ENCODE measurements at regions of chr9 and their contacts with region 1.

Region 1: GRCh38 chr9:136784249-136784996 is 6.7 kb upstream of the TMEM141 start:
- DNase-seq: peak; percentile 46
- H3K4me3 Mint-ChIP-seq: no peak overlapping the region
- H3K27ac Mint-ChIP-seq: no peak overlapping the region
- H3K4me1 Mint-ChIP-seq: peaks cover 5% of the 10 kb centered on the region
- H3K27me3 Mint-ChIP-seq: peaks cover 29% of the 10 kb centered on the region
- CTCF ChIP-seq: peak; percentile 71

Region 2: DNA sequence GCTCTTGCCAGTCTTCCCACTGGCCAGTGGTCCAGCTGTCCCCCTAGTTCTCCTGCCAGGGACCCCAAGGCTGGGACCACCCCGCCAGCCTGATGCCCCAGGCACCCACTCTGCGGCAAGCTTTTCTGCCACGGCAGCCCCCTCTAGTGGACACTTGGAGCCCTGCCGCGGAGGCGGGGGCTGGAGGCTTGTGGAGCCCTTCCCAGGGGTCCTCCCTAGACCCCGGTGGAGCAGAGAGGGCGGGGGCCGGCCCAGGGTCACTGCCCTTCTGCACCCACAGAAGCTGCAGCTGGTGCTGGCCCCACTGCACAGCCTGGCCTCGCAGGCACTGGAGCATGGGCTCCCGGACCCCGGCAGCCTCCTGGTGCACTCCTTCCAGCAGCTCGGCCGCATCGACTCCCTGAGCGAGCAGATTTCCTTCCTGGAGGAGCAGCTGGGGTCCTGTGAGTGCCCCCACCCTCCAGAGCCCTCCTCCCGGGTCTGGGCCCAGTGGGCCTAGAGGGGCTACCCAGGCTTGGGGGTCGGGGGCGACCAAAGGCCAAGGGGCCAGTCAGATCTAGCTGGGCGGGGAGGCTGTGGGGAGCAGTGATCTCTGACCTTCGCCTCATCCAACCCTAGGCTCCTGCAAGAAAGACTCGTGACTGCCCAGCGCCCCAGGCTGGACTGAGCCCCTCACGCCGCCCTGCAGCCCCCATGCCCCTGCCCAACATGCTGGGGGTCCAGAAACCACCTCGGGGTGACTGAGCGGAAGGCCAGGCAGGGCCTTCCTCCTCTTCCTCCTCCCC is 112.6 kb before region 1 on chr9:
- CTCF ChIA-PET with region 1: no interaction called
- POLR2A ChIA-PET with region 1: no interaction called
- intact Hi-C with region 1: no loop called
- DNase-seq: peak; percentile 28
- H3K4me3 Mint-ChIP-seq: no peak overlapping the region
- H3K27ac Mint-ChIP-seq: no peak overlapping the region
- H3K4me1 Mint-ChIP-seq: no peaks in the 10 kb centered on the region
- H3K27me3 Mint-ChIP-seq: no peaks in the 10 kb centered on the region
- CTCF ChIP-seq: peak; percentile 85

Region 3: DNA sequence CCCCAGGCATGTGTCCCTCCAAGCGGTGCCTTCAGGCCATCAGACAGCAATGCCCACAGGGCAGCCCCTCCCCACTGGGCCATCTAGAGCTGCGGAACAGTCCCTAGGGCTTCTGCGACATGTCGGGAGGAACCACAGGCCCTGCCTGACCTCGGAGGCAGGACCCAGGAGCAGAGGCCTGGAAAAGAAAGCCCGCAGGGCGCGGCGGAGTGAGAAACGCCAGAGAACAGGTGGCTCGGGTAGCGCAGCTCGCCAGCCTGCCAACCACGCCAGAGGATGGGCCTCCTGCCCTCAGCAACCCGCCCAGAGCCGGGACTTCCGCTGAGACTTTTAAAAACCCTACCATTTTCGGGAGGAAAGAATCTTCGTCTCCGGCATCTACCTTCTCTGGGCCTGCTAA is 27.1 kb before region 1 on chr9:
- CTCF ChIA-PET with region 1: interaction called, 30 read pairs
- POLR2A ChIA-PET with region 1: no interaction called
- intact Hi-C with region 1: no loop called
- DNase-seq: no peak
- H3K4me3 Mint-ChIP-seq: no peak overlapping the region
- H3K27ac Mint-ChIP-seq: no peak overlapping the region
- H3K4me1 Mint-ChIP-seq: no peaks in the 10 kb centered on the region
- H3K27me3 Mint-ChIP-seq: no peaks in the 10 kb centered on the region
- CTCF ChIP-seq: no peak

Region 4: GRCh38 chr9:136764301-136764948 is 20.0 kb before region 1 on chr9 and contains the start of gene LCN15:
- CTCF ChIA-PET with region 1: interaction called, 30 read pairs
- POLR2A ChIA-PET with region 1: no interaction called
- intact Hi-C with region 1: loop called (anchors 1 kb)
- DNase-seq: no peak
- H3K4me3 Mint-ChIP-seq: no peak within 1 kb of the TSS
- H3K27ac Mint-ChIP-seq: no peak within 1 kb of the TSS
- H3K4me1 Mint-ChIP-seq: peaks cover 7% of the 10 kb centered on the region
- H3K27me3 Mint-ChIP-seq: no peaks in the 10 kb centered on the region
- CTCF ChIP-seq: no peak
- total RNA-seq, gene LCN15: not detected in 2 replicates

Region 5: GRCh38 chr9:136769710-136770191 is 14.7 kb before region 1 on chr9:
- CTCF ChIA-PET with region 1: interaction called, 19 read pairs
- POLR2A ChIA-PET with region 1: interaction called, 3 read pairs
- intact Hi-C with region 1: loop called (anchors 1 kb)
- DNase-seq: peak; percentile 13
- H3K4me3 Mint-ChIP-seq: no peak overlapping the region
- H3K27ac Mint-ChIP-seq: no peak overlapping the region
- H3K4me1 Mint-ChIP-seq: peaks cover 7% of the 10 kb centered on the region
- H3K27me3 Mint-ChIP-seq: no peaks in the 10 kb centered on the region
- CTCF ChIP-seq: peak; percentile 37

Region 6: DNA sequence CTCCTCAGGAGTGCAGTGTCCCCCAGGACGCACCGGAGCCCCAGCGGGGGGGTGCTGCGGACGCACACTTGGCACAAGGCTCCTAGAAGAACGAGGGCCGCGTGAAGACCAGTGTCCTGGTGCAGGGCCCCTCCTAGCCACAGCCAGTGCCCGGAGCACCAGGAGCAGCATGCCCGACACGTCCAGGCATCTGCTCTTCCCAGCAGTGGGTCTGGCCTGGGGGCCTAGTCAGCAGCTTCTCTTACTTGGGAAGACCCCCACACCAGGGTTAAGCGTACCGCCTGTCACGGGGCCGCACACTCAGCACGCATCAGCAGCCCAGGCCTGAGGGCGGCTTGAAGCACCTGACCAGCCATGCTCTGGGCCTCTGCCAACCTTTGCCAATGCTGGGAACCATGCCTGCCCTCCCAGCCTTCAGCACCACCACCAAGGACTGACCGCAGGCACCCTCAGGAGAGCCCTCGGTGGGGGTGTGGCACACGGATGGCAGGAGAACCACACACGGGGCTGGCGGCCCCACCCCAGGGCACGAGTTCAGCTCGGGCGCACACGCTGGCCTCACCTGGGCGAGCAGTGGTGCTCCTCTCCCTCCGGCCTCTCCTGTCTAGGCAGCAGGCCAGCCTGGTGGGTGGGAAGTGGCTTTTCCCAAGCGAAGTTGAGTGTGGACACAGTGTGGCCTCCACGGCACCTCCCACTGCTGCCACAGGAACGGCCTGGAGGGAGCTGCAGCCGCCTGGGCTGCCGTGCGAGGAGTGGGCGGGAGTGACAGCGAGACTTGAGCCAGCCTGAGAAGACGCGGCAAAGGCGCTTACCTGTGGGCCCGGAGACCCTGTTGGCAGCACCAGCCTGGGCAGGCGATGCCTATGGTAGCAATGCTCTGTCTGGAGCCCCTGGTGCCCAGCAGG is 45.8 kb after region 1 on chr9:
- CTCF ChIA-PET with region 1: no interaction called
- POLR2A ChIA-PET with region 1: no interaction called
- intact Hi-C with region 1: no loop called
- DNase-seq: no peak
- H3K4me3 Mint-ChIP-seq: no peak overlapping the region
- H3K27ac Mint-ChIP-seq: no peak overlapping the region
- H3K4me1 Mint-ChIP-seq: no peaks in the 10 kb centered on the region
- H3K27me3 Mint-ChIP-seq: no peaks in the 10 kb centered on the region
- CTCF ChIP-seq: no peak

Region 7: GRCh38 chr9:137223078-137223970 is 438.9 kb after region 1 on chr9:
- CTCF ChIA-PET with region 1: no interaction called
- POLR2A ChIA-PET with region 1: no interaction called
- intact Hi-C with region 1: no loop called
- DNase-seq: peak; percentile 98
- H3K4me3 Mint-ChIP-seq: peak overlapping the region; percentile 83
- H3K27ac Mint-ChIP-seq: peak overlapping the region; percentile 61
- H3K4me1 Mint-ChIP-seq: peaks cover 15% of the 10 kb centered on the region
- H3K27me3 Mint-ChIP-seq: no peaks in the 10 kb centered on the region
- CTCF ChIP-seq: no peak